Activated T-helper 2 cell treated with anti-CD3 and anti-CD28 coated beads, Interferon-gamma antibody, Interleukin-2, Interleukin-4, amounts not matched to agents 10 μg/mL and 5 μg/mL and 100 μg/mL, durations not matched to agents 14 hours and 24 hours and 36 hours (primary cell): ENCODE measurements at regions of chr9 and their contacts with region 1.

Region 1: GRCh38 chr9:2396622-2397285 is 224.8 kb upstream of the VLDLR start:
- DNase-seq: no peak
- H3K4me3 Mint-ChIP-seq: no peak overlapping the region
- H3K27ac Mint-ChIP-seq: no peak overlapping the region
- H3K4me1 Mint-ChIP-seq: no peaks in the 10 kb centered on the region
- H3K27me3 Mint-ChIP-seq: peaks cover 2% of the 10 kb centered on the region

Region 2: DNA sequence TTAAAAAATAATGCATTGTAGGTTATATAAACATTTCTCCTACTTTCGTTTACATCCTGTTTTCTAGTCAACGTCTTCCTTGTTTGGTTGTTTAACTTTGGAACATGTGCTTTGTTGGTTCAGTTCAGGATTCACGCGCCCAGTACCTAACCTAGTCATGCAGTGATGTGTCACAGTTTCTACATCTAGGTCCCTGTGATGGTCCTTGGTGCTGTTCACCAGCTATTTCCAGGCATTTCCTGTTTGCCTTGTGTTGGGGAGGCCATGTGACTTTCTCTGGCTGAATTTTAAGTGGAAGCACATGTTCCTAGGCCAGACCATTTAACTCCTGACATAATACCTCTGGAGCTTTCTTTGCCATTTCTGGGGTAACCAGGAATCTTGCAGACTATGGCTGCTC is 89.3 kb before region 1 on chr9:
- intact Hi-C with region 1: no loop called
- DNase-seq: no peak
- H3K4me3 Mint-ChIP-seq: no peak overlapping the region
- H3K27ac Mint-ChIP-seq: no peak overlapping the region
- H3K4me1 Mint-ChIP-seq: no peaks in the 10 kb centered on the region
- H3K27me3 Mint-ChIP-seq: no peaks in the 10 kb centered on the region

Region 3: GRCh38 chr9:2377117-2377516 is 19.6 kb before region 1 on chr9:
- intact Hi-C with region 1: loop called (anchors 1 kb)
- DNase-seq: no peak
- H3K4me3 Mint-ChIP-seq: no peak overlapping the region
- H3K27ac Mint-ChIP-seq: no peak overlapping the region
- H3K4me1 Mint-ChIP-seq: no peaks in the 10 kb centered on the region
- H3K27me3 Mint-ChIP-seq: no peaks in the 10 kb centered on the region